ENCODE measurements at regions of chr2 and their contacts with region 1.

Region 1: GRCh38 chr2:174729797-174730697 is 34.2 kb downstream of the CHRNA1 start:
- DNase-seq: peak; percentile 69
- H3K4me3 Mint-ChIP-seq: peak overlapping the region; percentile 77
- H3K27ac Mint-ChIP-seq: no peak overlapping the region
- H3K4me1 Mint-ChIP-seq: peaks cover 9% of the 10 kb centered on the region
- H3K27me3 Mint-ChIP-seq: peaks cover 3% of the 10 kb centered on the region

Region 2: DNA sequence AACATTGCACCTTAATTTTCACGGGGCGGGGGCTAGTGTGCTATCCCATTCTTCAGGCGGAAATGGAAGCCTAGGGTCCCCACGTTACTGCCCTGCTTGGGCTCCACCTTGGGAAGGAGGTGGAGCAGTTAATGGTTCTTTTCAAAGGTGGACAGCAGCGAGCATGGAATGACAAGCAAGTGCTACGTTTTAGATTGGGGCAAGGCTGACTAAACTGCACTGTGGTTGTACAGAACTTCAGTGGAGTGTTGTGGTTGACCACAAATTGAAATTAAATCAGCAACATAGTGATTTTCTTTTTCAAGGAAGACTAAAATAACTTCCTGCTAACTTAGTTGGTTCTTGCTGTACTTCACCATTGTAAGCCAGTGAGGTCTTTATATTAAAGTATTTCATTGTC is 12.8 kb before region 1 on chr2:
- CTCF ChIA-PET with region 1: interaction called, 17 read pairs
- POLR2A ChIA-PET with region 1: interaction called, 4 read pairs
- intact Hi-C with region 1: no loop called
- DNase-seq: peak; percentile 23
- H3K4me3 Mint-ChIP-seq: peak overlapping the region; percentile 28
- H3K27ac Mint-ChIP-seq: peak overlapping the region; percentile 43
- H3K4me1 Mint-ChIP-seq: peaks cover 25% of the 10 kb centered on the region
- H3K27me3 Mint-ChIP-seq: no peaks in the 10 kb centered on the region